HEK293 (cell line): ENCODE measurements at regions of chr6 and their contacts with region 1.

Region 1: GRCh38 chr6:32984605-32985389 is 16.4 kb downstream of the BRD2 start:
- H3K4me3 ChIP-seq: no peak overlapping the region
- H3K27ac ChIP-seq: no peak overlapping the region
- H3K4me1 ChIP-seq: peaks cover 4% of the 10 kb centered on the region; the same call in 1 of the 2 replicates
- CTCF ChIP-seq: peak; percentile 85

Region 2: DNA sequence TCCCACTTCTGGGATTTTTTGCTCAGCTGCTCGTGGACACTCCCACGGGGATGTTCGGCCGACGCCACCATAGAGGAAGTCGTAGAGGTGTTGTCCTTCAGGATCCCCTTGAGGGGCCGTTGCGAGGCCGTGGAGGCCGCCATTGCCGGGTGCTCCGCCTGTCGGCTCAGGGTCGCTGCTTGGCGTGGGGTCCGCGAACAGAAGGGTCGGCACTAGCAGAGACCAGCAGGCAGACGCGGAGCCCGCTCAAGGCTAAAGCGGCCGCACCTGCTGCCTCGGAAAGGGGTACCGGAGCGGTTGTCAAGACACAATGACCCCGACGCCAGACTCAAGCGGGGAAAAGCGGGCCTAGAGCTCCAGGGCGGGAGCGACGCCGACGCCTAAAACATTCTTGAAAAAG is 105.1 kb before region 1 on chr6:
- CTCF ChIA-PET with region 1: interaction called, 185 read pairs
- POLR2A ChIA-PET with region 1: interaction called, 3 read pairs
- H3K4me3 ChIP-seq: no peak overlapping the region
- H3K27ac ChIP-seq: no peak overlapping the region
- H3K4me1 ChIP-seq: no peaks in the 10 kb centered on the region
- CTCF ChIP-seq: no peak

Region 3: GRCh38 chr6:32894080-32895005 is 90.5 kb before region 1 on chr6:
- CTCF ChIA-PET with region 1: interaction called, 39 read pairs
- POLR2A ChIA-PET with region 1: interaction called, 24 read pairs
- H3K4me3 ChIP-seq: peak overlapping the region; percentile 66
- H3K27ac ChIP-seq: peak overlapping the region; percentile 96
- H3K4me1 ChIP-seq: peaks cover 5% of the 10 kb centered on the region
- CTCF ChIP-seq: peak; percentile 52; the same call in 1 of the 2 replicates

Region 4: DNA sequence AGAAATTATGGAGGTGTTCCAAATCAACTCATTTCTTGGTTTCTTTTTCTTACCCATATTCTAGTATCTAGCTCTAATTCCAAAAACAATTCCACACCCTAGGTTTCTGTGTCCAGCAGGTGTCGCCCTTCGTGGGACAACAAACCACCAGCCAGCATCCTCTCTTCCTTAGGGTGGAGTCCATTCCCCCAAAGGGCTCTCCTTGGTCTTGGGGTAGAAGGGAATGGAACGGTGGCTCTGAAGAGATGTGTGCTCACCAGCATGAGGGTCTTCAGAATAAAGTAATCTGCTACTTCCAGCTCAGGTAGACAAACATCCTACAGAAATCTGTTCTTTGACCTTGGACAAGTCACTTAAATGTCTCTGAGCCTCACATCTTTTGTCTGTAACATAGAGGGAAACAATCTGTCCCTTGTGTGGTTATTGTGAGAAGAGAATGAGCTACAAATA is 51.1 kb before region 1 on chr6:
- CTCF ChIA-PET with region 1: interaction called, 250 read pairs
- POLR2A ChIA-PET with region 1: interaction called, 11 read pairs
- H3K4me3 ChIP-seq: no peak overlapping the region
- H3K27ac ChIP-seq: no peak overlapping the region
- H3K4me1 ChIP-seq: no peaks in the 10 kb centered on the region
- CTCF ChIP-seq: peak; percentile 37; the same call in 1 of the 2 replicates

Region 5: GRCh38 chr6:32947552-32948465 is 37.0 kb before region 1 on chr6:
- CTCF ChIA-PET with region 1: interaction called, 123 read pairs
- POLR2A ChIA-PET with region 1: interaction called, 25 read pairs
- H3K4me3 ChIP-seq: no peak overlapping the region
- H3K27ac ChIP-seq: no peak overlapping the region
- H3K4me1 ChIP-seq: no peaks in the 10 kb centered on the region
- CTCF ChIP-seq: peak; percentile 82

Region 6: GRCh38 chr6:33000055-33000454 is 15.3 kb after region 1 on chr6:
- CTCF ChIA-PET with region 1: interaction called, 24 read pairs
- POLR2A ChIA-PET with region 1: interaction called, 6 read pairs
- H3K4me3 ChIP-seq: no peak overlapping the region
- H3K27ac ChIP-seq: no peak overlapping the region
- H3K4me1 ChIP-seq: no peaks in the 10 kb centered on the region
- CTCF ChIP-seq: peak; percentile 74

Region 7: GRCh38 chr6:33147807-33148666 is 163.2 kb after region 1 on chr6:
- CTCF ChIA-PET with region 1: interaction called, 18 read pairs
- POLR2A ChIA-PET with region 1: no interaction called
- H3K4me3 ChIP-seq: no peak overlapping the region
- H3K27ac ChIP-seq: no peak overlapping the region
- H3K4me1 ChIP-seq: no peaks in the 10 kb centered on the region
- CTCF ChIP-seq: 0 out of 2 replicates have a peak, but pooled peaks have one; percentile 30